ENCODE measurements at regions of chr6 and their contacts with region 1.

Region 1: GRCh38 chr6:112180095-112180820 is 74.1 kb downstream of the LAMA4 start:
- DNase-seq: no peak
- H3K4me3 ChIP-seq: no peak overlapping the region
- H3K27ac ChIP-seq: no peak overlapping the region
- H3K4me1 ChIP-seq: peaks cover 0 to 6% (median 0%) of the 10 kb centered on the region in 4 donors
- H3K27me3 ChIP-seq: no peaks in the 10 kb centered on the region
- CTCF ChIP-seq: peak; percentile 79 to 85

Region 2: GRCh38 chr6:111427341-111428116 is 752.7 kb before region 1 on chr6:
- intact Hi-C with region 1: no loop called
- DNase-seq: no peak
- H3K4me3 ChIP-seq: no peak overlapping the region
- H3K27ac ChIP-seq: no peak overlapping the region
- H3K4me1 ChIP-seq: peaks cover 0 to 54% (median 10%) of the 10 kb centered on the region in 4 donors
- H3K27me3 ChIP-seq: no peaks in the 10 kb centered on the region
- CTCF ChIP-seq: no peak

Region 3: GRCh38 chr6:112282221-112282620 is 102.0 kb after region 1 on chr6:
- intact Hi-C with region 1: loop called (anchors 10 kb)
- DNase-seq: peak; percentile 59 to 73
- H3K4me3 ChIP-seq: no peak overlapping the region
- H3K27ac ChIP-seq: peak overlapping the region in 1 of 2 donors; percentile 42
- H3K4me1 ChIP-seq: peaks cover 0 to 36% (median 3%) of the 10 kb centered on the region in 4 donors
- H3K27me3 ChIP-seq: no peaks in the 10 kb centered on the region
- CTCF ChIP-seq: peak; percentile 42 to 44

Region 4: DNA sequence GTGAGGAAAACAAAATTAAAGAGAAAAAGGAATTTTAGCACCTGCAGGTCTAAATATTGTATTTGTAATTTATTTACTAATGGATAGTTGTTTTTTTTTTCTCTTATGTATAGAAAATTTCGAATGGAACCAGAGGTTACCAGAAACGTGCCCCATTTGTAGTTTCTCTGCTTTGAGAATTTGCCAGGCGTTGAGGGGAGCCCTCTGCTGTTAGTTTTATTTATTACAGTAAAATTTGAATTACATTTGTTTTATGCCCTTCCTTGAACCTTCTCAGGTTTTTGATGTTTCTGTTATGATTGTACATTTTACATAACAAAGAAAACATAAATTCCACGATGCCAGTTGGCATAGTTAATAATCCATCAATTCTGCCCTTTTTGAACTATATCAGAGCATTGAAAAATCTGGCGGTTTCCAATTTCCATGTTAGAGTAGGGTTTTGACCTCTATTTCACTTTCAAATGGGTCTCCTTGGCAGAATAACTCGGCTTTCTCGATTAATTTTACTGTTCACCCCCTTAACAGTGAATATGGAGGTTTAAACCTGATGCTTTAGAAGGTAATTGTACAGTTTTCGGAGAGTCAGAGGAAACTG is 131.8 kb after region 1 on chr6:
- intact Hi-C with region 1: loop called (anchors 2 kb)
- DNase-seq: no peak
- H3K4me3 ChIP-seq: no peak overlapping the region
- H3K27ac ChIP-seq: no peak overlapping the region
- H3K4me1 ChIP-seq: peaks cover 0 to 14% (median 0%) of the 10 kb centered on the region in 4 donors
- H3K27me3 ChIP-seq: no peaks in the 10 kb centered on the region
- CTCF ChIP-seq: peak; percentile 70 to 74

Region 5: DNA sequence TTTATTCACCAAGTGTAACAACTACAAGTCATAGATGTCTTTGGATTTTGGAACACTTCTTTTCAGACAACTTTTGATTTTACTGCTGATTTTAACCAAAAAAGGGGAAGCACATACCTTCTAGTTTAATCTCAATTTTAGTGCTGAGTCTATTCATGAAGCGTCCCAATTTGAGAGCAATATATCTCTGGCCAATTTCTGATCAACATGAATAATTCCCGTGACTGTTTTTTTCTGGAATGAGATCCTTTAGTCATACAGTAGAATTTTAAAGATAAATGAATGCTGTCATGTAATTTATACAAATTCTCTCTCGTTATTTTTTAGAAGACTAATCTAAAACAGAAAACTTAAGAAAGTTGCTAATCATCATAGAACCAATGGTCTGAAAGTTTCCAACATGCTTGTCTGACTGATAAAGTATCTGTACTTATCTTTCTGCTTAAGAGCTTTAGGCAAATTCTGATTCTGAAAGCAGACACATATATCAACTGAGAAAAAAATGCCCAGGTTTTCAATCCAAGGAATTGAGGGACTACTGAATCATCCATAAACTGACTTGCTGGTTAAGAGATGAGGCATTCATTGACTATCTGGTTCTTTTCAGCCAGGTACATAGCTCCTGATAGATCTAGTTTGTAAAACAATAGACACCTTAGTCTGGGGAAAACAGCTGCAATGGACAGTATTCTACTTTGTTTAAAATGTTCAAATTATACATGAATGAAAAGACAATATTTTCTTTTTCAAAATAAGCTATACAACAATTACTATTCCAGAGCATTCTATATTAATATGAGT is 824.4 kb after region 1 on chr6:
- intact Hi-C with region 1: no loop called
- DNase-seq: no peak
- H3K4me3 ChIP-seq: no peak overlapping the region
- H3K27ac ChIP-seq: no peak overlapping the region
- H3K4me1 ChIP-seq: peaks cover 0 to 4% (median 0%) of the 10 kb centered on the region in 4 donors
- H3K27me3 ChIP-seq: no peaks in the 10 kb centered on the region
- CTCF ChIP-seq: no peak